ENCODE measurements at regions of chr1 and their contacts with region 1.

Region 1: GRCh38 chr1:209692745-209693504 is 11.7 kb upstream of the HSD11B1 start:
- H3K4me3 Mint-ChIP-seq: no peak overlapping the region
- H3K27ac Mint-ChIP-seq: peak overlapping the region; percentile 44
- H3K4me1 Mint-ChIP-seq: peaks cover 48% of the 10 kb centered on the region
- H3K27me3 Mint-ChIP-seq: peaks cover 9% of the 10 kb centered on the region

Region 2: GRCh38 chr1:209302779-209303568 is 390.0 kb before region 1 on chr1:
- intact Hi-C with region 1: no loop called
- H3K4me3 Mint-ChIP-seq: no peak overlapping the region
- H3K27ac Mint-ChIP-seq: no peak overlapping the region
- H3K4me1 Mint-ChIP-seq: peaks cover 22% of the 10 kb centered on the region
- H3K27me3 Mint-ChIP-seq: peaks cover 9% of the 10 kb centered on the region

Region 3: GRCh38 chr1:209576798-209577197 is 116.1 kb before region 1 on chr1:
- intact Hi-C with region 1: loop called (anchors 1 kb)
- H3K4me3 Mint-ChIP-seq: no peak overlapping the region
- H3K27ac Mint-ChIP-seq: no peak overlapping the region
- H3K4me1 Mint-ChIP-seq: peaks cover 5% of the 10 kb centered on the region
- H3K27me3 Mint-ChIP-seq: peaks cover 39% of the 10 kb centered on the region

Region 4: GRCh38 chr1:209601809-209602657 is 90.9 kb before region 1 on chr1:
- intact Hi-C with region 1: loop called (anchors 1 kb)
- H3K4me3 Mint-ChIP-seq: no peak overlapping the region
- H3K27ac Mint-ChIP-seq: no peak overlapping the region
- H3K4me1 Mint-ChIP-seq: no peaks in the 10 kb centered on the region
- H3K27me3 Mint-ChIP-seq: peaks cover 19% of the 10 kb centered on the region

Region 5: DNA sequence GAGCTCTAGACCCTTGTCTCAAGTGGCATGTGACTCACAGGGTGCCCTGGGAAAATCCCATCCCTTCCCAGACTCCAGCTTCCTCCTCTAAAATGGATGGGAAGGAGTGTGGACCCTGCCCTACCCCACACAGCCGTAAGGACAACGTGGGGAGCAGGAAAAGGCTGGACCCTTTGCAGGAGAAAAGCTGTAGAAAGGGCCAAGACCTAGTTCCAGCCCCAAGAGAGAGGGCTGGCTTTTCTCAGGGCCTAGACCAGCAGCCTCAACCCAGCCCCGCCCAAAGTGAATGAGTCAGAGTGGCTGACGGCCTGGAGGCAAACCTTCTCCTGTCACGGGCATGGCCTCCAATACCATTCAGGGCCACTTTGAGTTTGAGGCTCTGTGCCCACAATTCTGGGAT is 41.8 kb before region 1 on chr1:
- intact Hi-C with region 1: loop called (anchors 5 kb)
- H3K4me3 Mint-ChIP-seq: no peak overlapping the region
- H3K27ac Mint-ChIP-seq: peak overlapping the region; percentile 83
- H3K4me1 Mint-ChIP-seq: peaks cover 90% of the 10 kb centered on the region
- H3K27me3 Mint-ChIP-seq: peaks cover 16% of the 10 kb centered on the region

Region 6: GRCh38 chr1:209747580-209748262 is 54.8 kb after region 1 on chr1:
- intact Hi-C with region 1: loop called (anchors 1 kb)
- H3K4me3 Mint-ChIP-seq: peak overlapping the region; percentile 80
- H3K27ac Mint-ChIP-seq: peak overlapping the region; percentile 77
- H3K4me1 Mint-ChIP-seq: peaks cover 73% of the 10 kb centered on the region
- H3K27me3 Mint-ChIP-seq: no peaks in the 10 kb centered on the region